Activated CD8-positive, alpha-beta T cell treated with anti-CD3 and anti-CD28 coated beads, Interleukin-2, amount 10 ng/mL, durations not matched to agents 7 days and 5 days (primary cell): ENCODE measurements at regions of chr11 and their contacts with region 1.

Region 1: GRCh38 chr11:65900125-65900898 is at the start of gene FOSL1:
- DNase-seq: peak; percentile 94
- ATAC-seq: peak; percentile 88
- H3K4me3 Mint-ChIP-seq: peak within 1 kb of the TSS; percentile 66
- H3K27ac Mint-ChIP-seq: peak within 1 kb of the TSS; percentile 71
- H3K4me1 Mint-ChIP-seq: peaks cover 59% of the 10 kb centered on the region
- H3K27me3 Mint-ChIP-seq: no peaks in the 10 kb centered on the region
- total RNA-seq, gene FOSL1: 2.3 to 3.8 TPM

Region 2: DNA sequence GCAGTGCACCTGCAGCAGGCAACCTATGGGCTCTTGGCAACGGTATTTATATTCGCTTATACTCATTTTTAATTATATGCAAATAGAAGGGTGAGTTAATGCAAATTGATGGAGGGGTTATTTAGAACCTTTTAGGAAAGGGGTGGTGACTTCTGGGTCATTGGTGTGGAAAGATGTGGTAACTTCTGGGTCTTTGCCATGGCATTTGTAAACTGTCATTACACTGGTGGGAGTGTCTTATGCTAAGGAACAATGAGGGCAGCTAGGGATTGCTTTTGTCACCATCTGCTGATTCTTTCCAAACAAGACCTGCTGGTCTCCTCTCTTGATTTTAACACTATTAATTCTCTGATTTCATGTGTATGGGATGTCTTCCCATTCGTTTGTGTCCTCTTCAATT is 199.9 kb before region 1 on chr11:
- CTCF ChIA-PET with region 1: no interaction called
- POLR2A ChIA-PET with region 1: no interaction called
- DNase-seq: no peak
- ATAC-seq: no peak
- H3K4me3 Mint-ChIP-seq: no peak overlapping the region
- H3K27ac Mint-ChIP-seq: no peak overlapping the region
- H3K4me1 Mint-ChIP-seq: no peaks in the 10 kb centered on the region
- H3K27me3 Mint-ChIP-seq: peaks cover 21% of the 10 kb centered on the region

Region 3: DNA sequence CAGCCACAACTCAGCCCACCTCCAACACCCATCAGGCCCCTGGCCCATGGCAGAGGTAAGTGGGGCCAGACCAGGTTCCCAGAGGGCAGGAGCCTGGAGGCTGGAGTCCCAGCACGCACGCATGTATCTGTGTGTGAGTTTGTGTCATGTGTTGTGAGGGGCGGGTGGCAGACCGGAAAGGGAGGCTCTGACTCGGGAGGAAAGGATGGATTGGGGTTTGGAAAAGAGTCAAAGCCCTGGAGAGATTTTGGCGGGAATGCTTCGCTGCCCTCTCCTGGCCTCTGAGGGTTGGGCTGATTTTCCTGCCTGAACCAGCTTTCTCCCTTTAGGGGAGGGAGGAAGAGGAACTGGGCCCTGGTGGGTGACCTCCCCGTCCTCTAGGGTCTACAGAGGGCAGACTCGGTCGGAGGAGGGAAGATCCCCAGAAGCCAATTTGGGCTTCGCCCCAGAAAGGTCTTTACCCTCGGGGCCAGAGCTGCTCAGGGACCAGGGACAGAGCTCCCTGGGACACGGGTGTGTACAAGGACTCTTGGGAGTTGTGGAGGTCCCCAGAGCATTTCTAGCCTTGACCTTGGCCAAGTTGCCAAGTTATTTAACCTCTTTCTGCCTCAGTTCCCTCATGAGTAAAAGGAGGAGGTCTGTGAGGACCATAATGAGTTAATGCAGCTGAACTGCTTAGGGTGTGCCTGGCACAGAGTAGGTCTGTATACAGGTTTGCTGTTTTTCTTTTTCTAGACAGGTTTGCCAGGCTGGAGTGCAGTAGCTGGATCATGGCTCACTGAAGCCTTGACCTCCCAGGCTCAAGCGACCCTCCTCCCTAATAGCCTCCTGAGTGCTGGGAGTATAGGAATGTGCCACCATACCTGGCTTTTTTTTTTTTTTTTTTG is 11.6 kb after region 1 on chr11:
- CTCF ChIA-PET with region 1: interaction called, 8 read pairs
- POLR2A ChIA-PET with region 1: interaction called, 14 read pairs
- DNase-seq: no peak
- ATAC-seq: no peak
- H3K4me3 Mint-ChIP-seq: no peak overlapping the region
- H3K27ac Mint-ChIP-seq: no peak overlapping the region
- H3K4me1 Mint-ChIP-seq: peaks cover 22% of the 10 kb centered on the region
- H3K27me3 Mint-ChIP-seq: no peaks in the 10 kb centered on the region

Region 4: GRCh38 chr11:65919146-65920033 is 19.1 kb after region 1 on chr11 and contains the start of gene DRAP1:
- CTCF ChIA-PET with region 1: interaction called, 10 read pairs
- POLR2A ChIA-PET with region 1: interaction called, 3 read pairs
- DNase-seq: peak; percentile 99
- ATAC-seq: peak; percentile 95
- H3K4me3 Mint-ChIP-seq: peak within 1 kb of the TSS; percentile 94
- H3K27ac Mint-ChIP-seq: peak within 1 kb of the TSS; percentile 91
- H3K4me1 Mint-ChIP-seq: peaks cover 44% of the 10 kb centered on the region
- H3K27me3 Mint-ChIP-seq: no peaks in the 10 kb centered on the region
- total RNA-seq, gene DRAP1: 219 to 240 TPM

Region 5: DNA sequence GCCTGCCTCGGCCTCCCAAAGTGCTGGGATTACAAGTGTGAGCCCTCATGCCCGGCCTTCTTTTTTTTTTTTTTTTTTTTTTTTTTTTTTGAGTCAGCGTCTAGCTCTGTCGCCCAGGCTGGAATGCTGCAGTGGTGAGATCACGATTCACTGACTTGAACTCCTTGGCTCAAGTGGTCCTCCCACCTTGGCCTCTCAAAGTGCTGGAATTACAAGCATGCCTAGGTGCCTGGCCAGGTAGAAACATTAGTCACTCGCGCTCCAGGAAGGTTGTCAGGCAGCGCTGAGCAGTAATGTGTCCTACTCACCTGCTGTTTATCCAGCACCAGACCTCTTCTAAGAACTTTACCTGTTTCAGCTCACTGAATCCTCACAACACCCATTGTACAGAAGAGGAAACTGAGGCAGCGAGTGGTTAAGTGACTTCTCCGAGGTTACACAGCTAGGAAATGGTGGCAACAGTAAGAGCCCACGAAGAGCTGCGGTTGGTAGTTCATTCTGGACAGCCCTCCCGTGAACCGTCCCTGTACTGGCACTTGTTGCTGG is 111.0 kb after region 1 on chr11:
- CTCF ChIA-PET with region 1: no interaction called
- POLR2A ChIA-PET with region 1: no interaction called
- DNase-seq: no peak
- ATAC-seq: no peak
- H3K4me3 Mint-ChIP-seq: no peak overlapping the region
- H3K27ac Mint-ChIP-seq: no peak overlapping the region
- H3K4me1 Mint-ChIP-seq: peaks cover 3% of the 10 kb centered on the region
- H3K27me3 Mint-ChIP-seq: peaks cover 27% of the 10 kb centered on the region

Region 6: GRCh38 chr11:66056501-66056900 is 156.2 kb after region 1 on chr11:
- CTCF ChIA-PET with region 1: no interaction called
- POLR2A ChIA-PET with region 1: no interaction called
- DNase-seq: no peak
- ATAC-seq: no peak
- H3K4me3 Mint-ChIP-seq: no peak overlapping the region
- H3K27ac Mint-ChIP-seq: no peak overlapping the region
- H3K4me1 Mint-ChIP-seq: peaks cover 22% of the 10 kb centered on the region
- H3K27me3 Mint-ChIP-seq: no peaks in the 10 kb centered on the region